ENCODE measurements at regions of chr20 and their contacts with region 1.

Region 1: GRCh38 chr20:35284267-35284991 is at the start of gene EIF6:
- DNase-seq: peak; percentile 89
- ATAC-seq: peak; percentile 90
- H3K4me3 ChIP-seq: peak within 1 kb of the TSS; percentile 98
- H3K27ac ChIP-seq: peak within 1 kb of the TSS; percentile 72
- H3K4me1 ChIP-seq: peaks cover 16% of the 10 kb centered on the region
- H3K27me3 ChIP-seq: no peaks in the 10 kb centered on the region
- CTCF ChIP-seq: no peak
- total RNA-seq, gene EIF6: 292 and 294 TPM in 2 replicates

Region 2: GRCh38 chr20:35454881-35455609 is 170.6 kb after region 1 on chr20 and contains the start of gene CEP250:
- CTCF ChIA-PET with region 1: no interaction called
- POLR2A ChIA-PET with region 1: interaction called, 15 read pairs
- intact Hi-C with region 1: no loop called
- DNase-seq: peak; percentile 98
- ATAC-seq: peak; percentile 84
- H3K4me3 ChIP-seq: peak within 1 kb of the TSS; percentile 70
- H3K27ac ChIP-seq: peak within 1 kb of the TSS; percentile 90
- H3K4me1 ChIP-seq: peaks cover 19% of the 10 kb centered on the region
- H3K27me3 ChIP-seq: no peaks in the 10 kb centered on the region
- CTCF ChIP-seq: no peak
- total RNA-seq, gene CEP250: 52.5 and 75.0 TPM in 2 replicates

Measured in PC-3 (cell line).